ENCODE measurements at regions of chr19 and their contacts with region 1.

Region 1: GRCh38 chr19:1266116-1266915 is 2.8 kb upstream of the CIRBP start:
- DNase-seq: peak in 1 of 2 donors; percentile 92
- H3K4me3 ChIP-seq: peak overlapping the region; percentile 54 to 69
- H3K27ac ChIP-seq: peak overlapping the region; percentile 99
- H3K4me1 ChIP-seq: peaks cover 80% of the 10 kb centered on the region
- H3K27me3 ChIP-seq: no peaks in the 10 kb centered on the region
- CTCF ChIP-seq: no peak
- POLR2A ChIP-seq: peak in 1 of 2 donors; percentile 5

Region 2: DNA sequence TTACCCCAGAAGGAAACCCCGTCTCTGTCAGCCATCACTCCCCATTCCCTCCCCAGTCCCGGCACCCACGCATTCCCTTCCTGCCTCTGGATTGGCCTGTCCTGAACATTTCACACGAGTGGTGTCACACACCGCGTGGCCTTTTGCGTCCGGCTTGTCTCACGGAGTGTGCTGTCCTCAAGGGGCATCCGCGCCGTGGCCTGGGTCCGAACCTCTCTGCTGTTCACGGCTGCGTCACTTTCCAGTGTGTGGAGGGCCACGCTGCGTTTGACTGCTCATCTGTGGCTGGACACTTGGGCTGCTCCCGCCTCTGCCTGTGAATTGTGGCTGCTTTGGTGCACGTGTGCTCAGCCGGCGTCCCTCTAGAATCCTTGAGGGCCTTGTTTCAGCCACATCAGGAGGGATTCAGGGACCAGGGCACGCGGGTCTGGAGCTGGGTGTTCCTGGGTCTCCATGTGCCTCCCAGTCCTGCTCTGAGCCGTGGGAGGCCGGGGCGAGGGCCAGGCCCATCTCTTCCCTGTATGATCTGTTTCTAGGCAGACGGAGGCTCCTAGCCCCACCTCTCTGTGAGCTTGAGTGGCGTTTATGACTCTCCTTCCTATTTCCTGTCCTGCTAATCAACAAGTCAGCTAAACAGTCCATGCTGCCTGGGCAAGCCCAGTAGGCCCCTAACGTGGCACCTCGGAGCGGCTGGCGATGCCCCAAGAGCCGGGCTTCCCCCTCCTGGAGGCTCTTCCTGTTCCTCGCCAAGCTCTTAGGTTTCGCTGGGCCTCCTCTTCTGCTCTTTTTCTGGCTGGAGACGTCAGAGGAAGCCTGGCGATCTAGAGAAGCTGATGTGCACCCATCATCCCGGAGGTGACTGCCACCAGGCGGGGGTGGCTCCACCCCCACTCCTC is 52.7 kb before region 1 on chr19:
- intact Hi-C with region 1: no loop called
- DNase-seq: no peak
- H3K4me3 ChIP-seq: peak overlapping the region; percentile 16 to 20
- H3K27ac ChIP-seq: peak overlapping the region; percentile 85
- H3K4me1 ChIP-seq: peaks cover 92% of the 10 kb centered on the region
- H3K27me3 ChIP-seq: no peaks in the 10 kb centered on the region
- CTCF ChIP-seq: no peak
- POLR2A ChIP-seq: peak in 1 of 2 donors; percentile 7

Region 3: GRCh38 chr19:1241417-1242095 is 24.8 kb before region 1 on chr19 and contains the start of gene ATP5F1D:
- intact Hi-C with region 1: loop called (anchors 1 kb)
- DNase-seq: no peak
- H3K4me3 ChIP-seq: peak within 1 kb of the TSS; percentile 70 to 90
- H3K27ac ChIP-seq: peak within 1 kb of the TSS; percentile 97
- H3K4me1 ChIP-seq: peaks cover 75% of the 10 kb centered on the region
- H3K27me3 ChIP-seq: no peaks in the 10 kb centered on the region
- CTCF ChIP-seq: no peak
- POLR2A ChIP-seq: peak in 1 of 2 donors; percentile 81
- total RNA-seq, gene ATP5F1D: 154 TPM